ENCODE measurements at regions of chr1 and their contacts with region 1.

Region 1: DNA sequence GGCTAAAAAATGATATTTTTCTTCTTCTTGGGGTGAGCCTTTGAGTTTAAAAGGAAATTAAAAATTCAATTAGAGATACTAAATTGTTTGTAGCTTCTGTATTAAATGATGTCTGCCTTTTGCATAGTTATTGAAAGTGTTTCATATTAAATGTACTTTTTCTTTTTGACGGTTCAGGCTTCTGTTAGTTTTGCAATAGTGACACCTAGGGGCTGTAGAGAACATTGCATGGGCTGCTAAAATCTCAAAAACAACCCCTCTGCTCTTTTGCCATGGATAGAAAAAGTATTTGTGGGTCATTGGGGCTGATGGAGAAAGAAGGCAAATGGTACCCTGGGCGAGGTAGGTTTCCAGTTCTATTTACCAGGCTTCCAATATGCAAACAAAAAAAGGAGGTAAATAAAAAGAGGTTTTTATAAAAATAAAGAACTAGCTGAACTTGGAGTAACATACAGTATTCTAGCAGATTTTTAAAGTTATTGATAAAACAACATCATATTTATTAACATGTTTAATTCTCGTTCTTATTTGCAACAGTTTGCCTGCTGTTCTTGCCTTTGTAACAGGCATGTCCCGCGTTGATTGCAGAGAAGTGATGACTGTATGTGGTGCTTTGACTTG is 115.4 kb upstream of the HOOK1 start:
- DNase-seq: peak in 2 of 10 donors; percentile 11 to 19

Region 2: DNA sequence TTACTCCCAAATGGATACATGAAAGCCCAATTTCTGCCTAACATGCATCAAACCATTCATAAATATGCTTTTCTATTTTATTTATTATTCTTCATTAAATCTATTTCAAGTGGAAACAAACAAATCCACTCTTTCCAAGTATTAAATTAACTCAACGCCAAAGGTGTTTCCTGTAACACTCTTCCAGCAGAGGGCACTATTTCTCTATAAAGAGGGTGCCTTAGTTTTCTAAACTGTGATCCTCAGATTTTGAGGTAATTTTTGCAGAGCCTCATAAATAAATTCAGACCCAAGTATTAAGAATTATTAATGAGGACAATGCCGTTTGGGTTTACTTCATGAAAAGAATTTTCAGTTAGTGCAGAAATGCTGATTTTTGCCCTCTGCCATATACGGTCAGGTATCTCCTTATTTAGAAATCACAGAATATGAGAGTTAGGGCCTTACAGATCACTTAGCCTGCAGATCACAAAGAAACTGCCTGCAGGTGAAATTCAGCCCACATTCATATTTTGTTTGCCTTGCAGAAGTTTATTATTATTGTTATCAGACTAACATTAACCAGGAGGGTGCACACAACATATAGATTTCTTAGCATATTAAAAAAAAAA is 959.4 kb before region 1 on chr1:
- intact Hi-C with region 1: loop called (anchors 1 kb)
- DNase-seq: no peak

Region 3: DNA sequence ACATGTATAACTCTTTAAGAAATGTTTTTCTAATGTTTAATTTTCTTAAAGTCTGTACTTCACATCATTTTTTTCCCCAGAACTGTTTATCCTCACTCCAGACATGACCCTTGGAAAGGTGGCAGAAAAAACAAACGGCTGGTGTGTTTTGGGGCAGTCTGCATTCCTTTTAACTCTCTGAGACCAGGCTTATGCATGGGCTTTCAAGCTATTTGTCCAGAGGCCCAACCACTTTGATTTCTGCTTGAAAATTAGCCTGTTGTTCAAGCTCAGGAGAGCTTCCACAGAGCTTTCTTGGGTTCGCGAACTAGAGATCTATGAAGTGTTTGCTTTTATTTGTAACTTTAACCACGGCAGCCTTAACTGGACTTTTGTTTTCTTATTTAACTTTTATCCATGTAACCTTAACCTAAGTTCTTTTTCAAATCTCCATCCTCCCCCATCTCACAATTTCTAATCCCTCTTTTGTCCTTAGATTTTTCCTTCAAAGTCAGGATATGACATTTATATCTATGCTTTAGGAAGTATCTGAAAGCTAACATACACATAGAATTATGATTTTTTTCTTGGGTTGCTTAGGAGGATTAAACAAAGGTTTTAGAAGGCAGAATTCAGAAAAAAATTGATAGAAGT is 290.6 kb before region 1 on chr1:
- intact Hi-C with region 1: no loop called
- DNase-seq: no peak

Region 4: GRCh38 chr1:60017508-60018205 is 318.3 kb after region 1 on chr1:
- intact Hi-C with region 1: no loop called
- DNase-seq: no peak